ENCODE measurements at regions of chr1 and their contacts with region 1.

Region 1: DNA sequence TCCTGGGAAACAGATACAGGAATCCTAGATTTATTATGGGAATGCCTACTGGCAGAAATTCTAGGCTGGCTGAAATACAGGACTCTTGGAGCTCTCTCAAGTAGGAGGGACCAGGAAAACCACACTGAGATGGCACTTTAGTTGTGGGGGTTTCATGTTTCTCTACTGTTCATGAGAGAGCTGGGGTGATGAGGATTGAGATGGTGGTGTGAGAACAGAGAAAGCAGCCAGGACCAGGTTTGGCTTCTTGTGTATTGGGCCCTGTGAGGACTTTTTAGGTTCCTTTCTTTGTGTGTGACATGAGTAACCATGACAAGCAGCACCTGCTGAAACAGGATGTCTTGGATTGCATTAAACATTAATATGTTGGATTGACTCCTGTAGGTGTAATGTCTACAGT is 4.9 kb downstream of the ARID1A start:
- DNase-seq: no peak
- ATAC-seq: no peak

Region 2: GRCh38 chr1:26754086-26754874 is 53.6 kb after region 1 on chr1:
- intact Hi-C with region 1: loop called in 1 of 2 experiments (anchors 5 kb)
- DNase-seq: no peak
- ATAC-seq: no peak